GM10248 (cell line): ENCODE measurements at regions of chr2 and their contacts with region 1.

Region 1: GRCh38 chr2:119641562-119642258 is 37.3 kb upstream of the TMEM177 start:
- DNase-seq: peak; percentile 83
- CTCF ChIP-seq: peak; percentile 99

Region 2: DNA sequence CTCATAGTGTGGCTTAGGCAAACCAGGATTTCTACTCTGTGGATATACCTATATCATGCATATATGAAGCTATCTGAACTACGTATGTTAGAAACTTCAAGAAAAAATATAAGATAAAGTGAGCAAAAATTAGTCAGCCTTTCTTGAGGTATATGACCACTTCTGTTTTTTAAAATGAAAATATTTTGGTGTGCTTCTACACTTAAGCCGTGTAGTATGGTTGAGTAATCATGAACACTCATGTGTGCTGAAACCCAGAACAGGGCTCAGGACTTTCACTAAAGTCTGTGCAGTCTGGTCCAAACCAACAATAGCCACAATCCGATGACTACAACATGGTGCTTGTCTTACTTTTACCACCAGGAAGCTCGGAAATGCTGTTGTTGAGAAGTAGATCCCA is 11.6 kb before region 1 on chr2:
- CTCF ChIA-PET with region 1: interaction called, 12 read pairs
- POLR2A ChIA-PET with region 1: no interaction called
- DNase-seq: no peak
- CTCF ChIP-seq: no peak

Region 3: GRCh38 chr2:119659601-119660342 is 18.1 kb after region 1 on chr2:
- CTCF ChIA-PET with region 1: interaction called, 48 read pairs
- POLR2A ChIA-PET with region 1: no interaction called
- DNase-seq: no peak
- CTCF ChIP-seq: peak; percentile 66